Psoas muscle (tissue), 8 donors: ENCODE measurements at regions of chr4 and their contacts with region 1.

Region 1: DNA sequence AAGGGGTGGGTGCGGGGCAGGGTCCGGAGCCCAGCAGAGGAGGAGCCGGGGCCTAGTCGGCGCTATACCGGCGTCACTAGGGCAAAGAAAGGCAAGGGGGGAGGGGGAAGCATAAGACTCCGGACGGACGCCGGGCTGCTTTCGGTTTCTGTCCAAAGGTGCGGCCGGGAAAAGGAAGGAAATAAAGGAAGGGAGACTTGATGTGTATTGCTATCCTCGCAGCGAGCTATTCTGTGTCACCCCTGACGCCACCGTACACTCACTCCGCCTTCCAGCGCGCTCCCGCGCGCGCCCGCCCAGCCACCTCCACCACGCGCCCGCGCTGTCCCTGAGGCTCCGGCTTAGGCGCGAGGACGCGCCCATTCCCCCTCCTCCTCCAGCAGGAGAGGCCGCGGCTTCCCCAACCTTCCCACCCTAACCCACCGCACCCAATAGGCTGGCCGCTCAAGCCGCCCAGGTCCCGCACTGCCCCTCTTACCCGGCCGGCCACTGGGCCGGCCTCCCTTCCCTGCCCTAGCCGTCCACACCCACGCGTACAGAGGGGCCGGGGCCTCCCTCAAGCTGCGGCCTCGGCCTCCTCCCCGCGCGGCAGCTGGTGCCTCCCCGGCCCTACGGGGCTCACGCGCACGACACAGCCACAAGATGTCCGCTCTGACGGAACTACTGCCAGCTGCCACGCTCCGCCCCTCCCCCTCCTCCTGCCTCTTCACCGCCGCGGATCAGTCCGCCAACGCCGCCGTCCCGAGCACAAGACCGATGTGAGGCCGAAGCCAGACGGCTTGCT is at the start of gene UBE2D3:
- DNase-seq: peak; percentile 95 to 98
- ATAC-seq: peak; percentile 74 to 80 (median 76)
- H3K4me3 ChIP-seq: peak within 1 kb of the TSS; percentile 89
- H3K27ac ChIP-seq: peak within 1 kb of the TSS; percentile 100
- H3K4me1 ChIP-seq: peaks cover 45% of the 10 kb centered on the region
- H3K27me3 ChIP-seq: no peaks in the 10 kb centered on the region
- CTCF ChIP-seq: no peak
- total RNA-seq, gene UBE2D3: 221 to 367 (median 346) TPM

Region 2: GRCh38 chr4:102500696-102501446 is 326.2 kb before region 1 on chr4 and contains the start of gene NFKB1:
- intact Hi-C with region 1: loop called in 1 of 2 experiments (anchors 5 kb)
- DNase-seq: peak; percentile 63 to 84
- ATAC-seq: peak; percentile 70 to 74 (median 72)
- H3K4me3 ChIP-seq: peak within 1 kb of the TSS; percentile 84
- H3K27ac ChIP-seq: peak within 1 kb of the TSS; percentile 98
- H3K4me1 ChIP-seq: peaks cover 38% of the 10 kb centered on the region
- H3K27me3 ChIP-seq: no peaks in the 10 kb centered on the region
- CTCF ChIP-seq: no peak
- total RNA-seq, gene NFKB1: 19.8 to 47.5 (median 22.5) TPM

Region 3: DNA sequence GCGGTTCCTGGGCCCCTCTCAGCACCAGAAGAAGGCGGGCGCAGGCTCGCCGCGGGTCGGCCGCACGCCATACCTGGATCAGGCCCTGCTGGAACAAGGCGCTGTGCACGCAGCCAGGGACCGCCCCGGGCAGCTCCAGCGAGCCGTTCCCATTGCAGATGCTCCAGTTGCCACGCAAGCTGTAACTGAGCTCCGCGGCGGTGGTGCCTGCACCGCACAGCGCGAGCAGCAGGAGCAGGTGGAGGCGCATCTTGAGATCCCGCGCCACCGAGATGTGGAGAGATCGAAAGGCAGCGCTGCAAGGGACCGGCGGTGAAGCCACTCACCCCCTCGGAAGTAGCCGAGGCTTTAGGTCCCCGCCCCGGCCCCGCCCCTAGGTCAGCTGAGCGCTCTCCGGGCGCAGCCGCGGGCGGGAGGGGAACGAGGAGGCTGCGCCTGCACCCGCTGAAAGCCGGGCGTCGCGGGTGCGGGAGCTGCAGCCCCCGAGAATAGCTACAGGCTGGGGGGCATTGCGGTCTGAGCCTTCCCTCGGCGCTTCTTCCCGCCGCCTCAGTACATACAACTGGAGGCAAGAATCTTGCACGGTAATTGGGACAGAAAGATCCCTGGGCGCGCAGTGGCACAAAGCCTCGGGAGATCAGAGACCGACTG is 66.3 kb before region 1 on chr4 and contains the start of gene MANBA:
- intact Hi-C with region 1: loop called in 1 of 2 experiments (anchors 1 kb)
- DNase-seq: peak; percentile 85 to 91
- ATAC-seq: peak; percentile 93 to 98 (median 96)
- H3K4me3 ChIP-seq: peak within 1 kb of the TSS; percentile 87
- H3K27ac ChIP-seq: peak within 1 kb of the TSS; percentile 81
- H3K4me1 ChIP-seq: peaks cover 4% of the 10 kb centered on the region
- H3K27me3 ChIP-seq: no peaks in the 10 kb centered on the region
- CTCF ChIP-seq: no peak
- total RNA-seq, gene MANBA: 3.5 to 11.9 (median 8.2) TPM

Region 4: DNA sequence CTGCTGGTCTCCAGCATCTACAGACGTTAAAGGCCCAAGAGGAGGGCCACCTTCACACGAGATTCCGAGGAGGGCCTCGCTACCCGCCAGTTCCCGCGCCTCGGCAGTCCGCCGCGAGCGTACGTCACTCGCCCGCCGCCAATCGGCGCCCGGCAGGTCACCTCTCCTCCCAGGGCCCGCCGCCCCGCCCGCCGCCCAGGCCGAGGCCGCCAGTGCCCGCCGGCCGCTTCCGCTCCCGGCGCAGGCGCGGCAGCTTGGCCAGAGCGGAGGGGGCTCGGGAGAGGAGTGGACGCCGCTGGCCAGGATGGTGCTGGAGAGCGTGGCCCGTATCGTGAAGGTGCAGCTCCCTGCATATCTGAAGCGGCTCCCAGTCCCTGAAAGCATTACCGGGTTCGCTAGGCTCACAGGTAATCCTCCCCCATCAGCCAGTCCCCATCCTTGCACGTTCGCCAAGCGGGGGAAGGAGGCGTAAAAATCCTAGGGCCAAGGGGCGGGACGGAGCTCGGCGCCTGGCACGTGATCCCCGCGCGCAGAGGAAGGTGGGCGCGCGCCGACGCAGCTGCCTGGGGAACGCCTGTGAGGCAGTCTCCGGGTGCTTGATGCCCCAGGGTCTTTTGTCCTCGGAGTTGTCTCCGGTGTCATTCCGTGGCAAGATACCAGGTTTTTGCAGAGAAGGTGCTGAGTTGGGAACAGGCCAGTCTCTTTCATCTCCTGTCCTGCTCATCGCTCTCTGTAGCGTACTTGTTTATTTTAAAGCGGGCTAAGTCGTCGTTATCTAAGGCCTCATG is 41.9 kb after region 1 on chr4 and contains the start of gene CISD2:
- intact Hi-C with region 1: loop called (anchors 2 kb)
- DNase-seq: peak; percentile 92 to 95
- ATAC-seq: peak; percentile 97 to 98 (median 98)
- H3K4me3 ChIP-seq: peak within 1 kb of the TSS; percentile 82
- H3K27ac ChIP-seq: peak within 1 kb of the TSS; percentile 91
- H3K4me1 ChIP-seq: peaks cover 20% of the 10 kb centered on the region
- H3K27me3 ChIP-seq: no peaks in the 10 kb centered on the region
- CTCF ChIP-seq: no peak
- total RNA-seq, gene CISD2: 6.2 to 13.0 (median 9.1) TPM

Region 5: DNA sequence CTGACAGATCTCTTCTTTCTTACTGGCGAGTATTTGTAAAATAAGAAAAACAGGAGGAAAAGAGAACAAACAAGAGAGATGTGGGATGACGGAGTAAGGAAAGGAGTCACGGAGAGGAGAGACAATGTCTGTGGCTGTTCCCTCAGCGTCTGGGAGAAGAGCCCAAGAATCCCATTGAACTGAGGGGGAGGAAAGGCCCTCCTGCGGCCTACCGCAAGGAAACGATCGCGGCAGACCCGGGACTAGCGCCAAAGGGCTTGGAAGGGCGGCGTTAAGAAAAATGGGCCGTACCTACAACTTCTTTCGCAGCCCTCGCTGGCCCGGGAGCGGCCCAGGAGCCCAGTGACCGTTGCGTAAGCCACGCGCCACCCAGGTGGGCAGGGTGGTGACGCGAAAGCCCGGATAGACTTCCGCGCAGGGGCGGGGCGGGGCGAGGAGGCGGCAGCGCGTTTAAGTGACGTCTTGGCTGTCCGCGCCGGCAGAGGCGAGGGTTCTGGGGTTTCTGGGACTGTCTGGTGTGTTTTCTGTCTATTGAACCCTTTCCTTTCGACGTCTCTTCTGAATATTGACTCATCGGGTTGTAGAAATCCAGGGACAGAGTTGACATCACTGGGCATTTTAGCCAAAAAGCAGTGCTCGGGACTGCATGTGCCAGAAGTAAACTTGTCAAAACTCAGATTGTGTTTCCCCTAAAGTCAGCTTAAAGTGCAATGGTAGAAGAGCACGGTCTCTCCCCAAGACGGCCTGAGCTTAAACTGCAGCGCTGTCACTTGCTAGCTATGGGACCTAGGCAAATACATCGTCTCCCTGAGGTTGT is 192.4 kb after region 1 on chr4 and contains the start of gene SLC9B1:
- intact Hi-C with region 1: loop called in 1 of 2 experiments (anchors 2 kb)
- DNase-seq: peak; percentile 98
- ATAC-seq: peak; percentile 97 to 99 (median 98)
- H3K4me3 ChIP-seq: peak within 1 kb of the TSS; percentile 63
- H3K27ac ChIP-seq: peak within 1 kb of the TSS; percentile 92
- H3K4me1 ChIP-seq: peaks cover 6% of the 10 kb centered on the region
- H3K27me3 ChIP-seq: no peaks in the 10 kb centered on the region
- CTCF ChIP-seq: no peak
- total RNA-seq, gene SLC9B1: 1.6 TPM in 1 of 4 donors, not detected in the others